Common myeloid progenitor, CD34-positive (primary cell): ENCODE measurements at regions of chr17 and their contacts with region 1.

Region 1: GRCh38 chr17:8965394-8966168 is at the start of gene PIK3R5:
- DNase-seq: peak; percentile 80 to 96 (median 93)
- H3K4me3 ChIP-seq: peak within 1 kb of the TSS; percentile 60 to 85 (median 75)
- H3K27ac ChIP-seq: peak within 1 kb of the TSS in 1 of 2 experiments; percentile 31
- H3K4me1 ChIP-seq: peaks cover 3 to 47% (median 34%) of the 10 kb centered on the region in 4 experiments
- H3K27me3 ChIP-seq: no peaks in the 10 kb centered on the region

Region 2: DNA sequence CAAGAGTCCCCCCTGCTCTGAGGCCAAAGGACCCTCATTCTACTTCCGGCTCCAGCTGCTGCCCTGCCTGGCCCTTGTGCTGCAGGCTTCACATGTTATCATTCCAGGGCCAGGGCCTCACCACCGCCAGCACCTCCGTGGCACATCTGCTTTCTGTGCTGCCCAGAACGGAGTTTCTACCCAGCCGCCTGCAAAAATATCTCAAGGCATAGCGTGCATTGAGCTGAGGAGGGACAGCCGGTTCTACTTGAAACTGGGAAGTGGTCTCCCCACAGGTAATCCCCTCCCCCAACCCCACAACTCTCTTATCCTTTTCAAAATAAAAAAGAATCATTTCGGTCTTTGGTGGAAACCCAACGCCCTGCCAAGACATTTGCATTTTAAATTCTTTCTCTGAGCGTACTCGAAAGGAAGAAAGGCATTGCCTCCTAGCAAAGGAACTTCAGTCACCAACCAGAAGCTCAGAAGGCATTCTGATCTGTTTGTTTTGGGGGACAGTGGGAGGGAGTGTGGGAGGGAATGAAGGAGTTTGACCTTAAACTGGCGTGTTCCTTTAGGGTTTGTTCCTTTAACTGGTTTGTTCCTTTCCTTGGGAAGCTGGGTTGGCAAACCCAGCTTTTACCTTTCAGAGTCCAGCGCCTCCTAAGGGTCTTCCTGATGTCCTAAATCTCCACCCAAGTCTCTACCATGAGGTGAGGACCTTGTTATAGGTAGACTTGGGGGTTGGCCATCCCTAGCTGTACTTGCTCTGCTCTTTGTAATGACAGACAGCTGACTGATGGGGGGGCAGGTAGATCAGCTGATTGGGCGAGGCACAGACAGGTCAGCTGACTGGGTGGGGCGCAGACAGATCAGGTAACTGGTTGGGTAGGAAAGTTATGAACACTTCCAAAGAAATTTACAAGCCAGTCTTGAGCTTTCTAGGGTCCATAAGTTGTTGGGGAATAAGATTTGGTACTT is 64.7 kb before region 1 on chr17:
- CTCF ChIA-PET with region 1: interaction called, 12 read pairs
- POLR2A ChIA-PET with region 1: no interaction called
- DNase-seq: peak in 2 of 3 donors; percentile 56 to 65
- H3K4me3 ChIP-seq: peak overlapping the region in 4 of 7 experiments; percentile 2 to 45 (median 14)
- H3K27ac ChIP-seq: no peak overlapping the region
- H3K4me1 ChIP-seq: peaks cover 11 to 50% (median 38%) of the 10 kb centered on the region in 4 experiments
- H3K27me3 ChIP-seq: no peaks in the 10 kb centered on the region

Region 3: DNA sequence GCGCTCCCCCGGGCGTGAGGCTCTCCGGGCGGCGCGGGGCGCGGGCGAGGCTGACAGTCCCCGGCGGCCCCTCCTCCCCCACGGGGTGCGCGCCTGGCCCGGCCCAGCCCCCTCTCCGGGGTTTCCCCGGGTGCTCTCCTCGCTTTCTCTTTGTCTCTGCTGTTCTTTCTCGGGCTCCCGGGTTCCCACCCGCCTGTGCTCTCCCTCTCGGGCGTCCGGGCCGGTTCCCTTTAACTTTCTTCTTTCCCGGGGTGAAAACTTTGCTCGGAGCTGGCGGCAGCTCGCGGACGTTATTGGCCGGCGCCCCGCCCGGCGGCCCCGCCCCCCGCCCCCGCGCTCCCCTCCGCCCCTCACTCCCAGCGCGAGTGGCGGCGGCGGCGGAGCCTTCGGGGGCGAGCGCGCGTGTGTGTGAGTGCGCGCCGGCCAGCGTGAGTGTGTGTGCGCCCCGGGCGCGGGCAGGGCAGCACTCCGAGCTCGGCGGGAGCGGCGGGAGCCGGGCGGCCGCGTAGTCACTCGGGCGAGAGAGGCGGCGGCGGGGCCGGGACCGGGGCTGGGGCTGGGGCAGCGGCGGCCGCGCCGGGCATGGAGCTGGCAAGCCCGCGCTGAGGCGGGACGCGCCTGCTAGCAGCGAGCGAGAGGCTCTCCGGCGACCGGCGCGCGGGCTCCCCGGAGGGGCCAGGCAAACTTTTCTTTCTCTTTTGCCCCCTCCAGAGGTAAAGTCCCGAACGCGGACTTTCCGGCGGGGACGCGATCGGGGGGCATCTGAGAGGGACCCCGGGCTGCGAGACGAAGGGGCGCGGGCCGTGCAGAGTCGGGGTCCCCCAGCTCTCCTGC is 55.8 kb after region 1 on chr17 and contains the start of gene NTN1:
- CTCF ChIA-PET with region 1: no interaction called
- POLR2A ChIA-PET with region 1: no interaction called
- DNase-seq: peak in 2 of 3 donors; percentile 73 to 79
- H3K4me3 ChIP-seq: peak within 1 kb of the TSS; percentile 53 to 80 (median 66)
- H3K27ac ChIP-seq: no peak within 1 kb of the TSS
- H3K4me1 ChIP-seq: peaks cover 0 to 40% (median 38%) of the 10 kb centered on the region in 4 experiments
- H3K27me3 ChIP-seq: peaks cover 10 to 82% (median 37%) of the 10 kb centered on the region in 5 experiments

Region 4: DNA sequence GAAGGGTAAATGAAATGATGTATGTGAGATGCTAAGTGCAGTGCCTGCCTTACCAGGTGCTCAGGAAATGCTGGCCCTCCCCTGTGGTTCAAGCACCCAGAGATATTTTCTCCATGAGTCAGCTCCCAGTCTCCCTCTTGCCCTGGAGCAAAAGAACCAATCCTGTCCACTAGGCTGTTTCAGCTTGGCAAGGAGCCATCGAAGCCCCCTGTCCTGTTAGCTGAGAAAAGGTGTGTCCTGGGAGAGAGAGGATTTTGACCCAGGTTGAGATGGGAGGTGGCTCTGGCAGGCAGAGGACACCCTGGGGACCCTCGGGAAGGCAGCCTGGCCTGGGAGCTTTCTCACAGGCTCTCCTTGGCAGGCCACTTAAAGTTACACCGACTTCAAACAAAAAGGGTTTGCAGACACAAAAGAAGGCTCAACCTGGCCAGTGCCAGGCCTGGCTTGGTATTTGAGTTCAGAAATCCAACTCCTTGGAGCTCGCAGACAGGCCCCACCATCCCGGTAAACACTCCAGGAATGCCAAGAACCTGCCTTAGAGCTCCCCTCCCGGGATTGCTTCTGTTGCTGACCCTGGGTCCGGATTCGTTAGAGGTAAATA is 85.3 kb after region 1 on chr17:
- CTCF ChIA-PET with region 1: no interaction called
- POLR2A ChIA-PET with region 1: no interaction called
- DNase-seq: no peak
- H3K4me3 ChIP-seq: no peak overlapping the region
- H3K27ac ChIP-seq: no peak overlapping the region
- H3K4me1 ChIP-seq: no peaks in the 10 kb centered on the region
- H3K27me3 ChIP-seq: no peaks in the 10 kb centered on the region